CD4-positive, alpha-beta memory T cell (primary cell): ENCODE measurements at regions of chr5 and their contacts with region 1.

Region 1: DNA sequence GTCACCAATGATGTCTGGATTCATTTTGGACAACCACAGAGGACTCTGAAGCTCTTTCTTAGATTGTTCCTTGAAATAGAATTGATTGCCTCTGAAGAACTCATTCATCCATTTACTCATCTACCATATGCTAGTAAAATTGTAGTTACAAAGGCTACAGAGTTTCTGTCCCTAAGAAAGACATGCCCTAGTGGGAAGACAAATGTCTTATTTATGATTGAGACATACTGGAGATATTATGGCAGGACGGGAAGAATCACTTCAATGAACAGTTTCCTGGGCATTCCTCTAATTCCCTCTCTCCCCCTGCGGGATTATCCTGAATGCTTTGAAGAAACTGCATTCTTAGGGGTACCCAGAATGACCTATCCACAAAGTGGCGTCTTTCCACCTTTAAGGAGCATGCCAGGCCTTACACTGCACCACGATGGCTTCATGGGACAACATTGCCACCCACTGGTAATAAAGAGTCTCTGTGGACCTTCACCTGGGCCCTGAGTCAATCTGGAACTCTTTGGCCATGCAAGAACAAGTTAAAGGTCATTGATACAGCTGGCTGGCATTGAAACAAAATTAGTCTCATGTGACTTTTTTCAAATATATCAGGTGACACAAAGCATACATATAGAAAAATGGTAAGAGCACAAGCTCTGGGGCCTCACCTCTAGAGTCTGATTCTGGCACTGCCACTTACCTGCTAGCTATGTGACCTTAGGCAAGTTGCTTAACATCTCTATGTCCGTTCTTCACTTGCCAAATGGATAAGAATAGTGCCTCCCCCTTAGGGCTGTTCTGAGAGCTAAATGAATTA is 32.1 kb downstream of the ANKRD55 start:
- DNase-seq: peak; percentile 59 to 66 (median 63)
- H3K4me3 ChIP-seq: no peak overlapping the region
- H3K4me3 Mint-ChIP-seq: peak overlapping the region in 1 of 8 donors; percentile 24
- H3K27ac ChIP-seq: no peak overlapping the region
- H3K27ac Mint-ChIP-seq: peak overlapping the region in 2 of 7 donors; percentile 2 to 38
- H3K4me1 ChIP-seq: peaks cover 12% of the 10 kb centered on the region
- H3K4me1 Mint-ChIP-seq: peaks cover 17 to 29% (median 24%) of the 10 kb centered on the region in 4 donors
- H3K27me3 ChIP-seq: no peaks in the 10 kb centered on the region
- H3K27me3 Mint-ChIP-seq: no peaks in the 10 kb centered on the region

Region 2: GRCh38 chr5:55344392-55344992 is 856.6 kb before region 1 on chr5:
- CTCF ChIA-PET with region 1: no interaction called
- POLR2A ChIA-PET with region 1: no interaction called
- intact Hi-C with region 1: loop called (anchors 10 kb)
- DNase-seq: peak; percentile 38 to 59 (median 55)
- H3K4me3 ChIP-seq: no peak overlapping the region
- H3K4me3 Mint-ChIP-seq: no peak overlapping the region
- H3K27ac ChIP-seq: no peak overlapping the region
- H3K27ac Mint-ChIP-seq: peak overlapping the region in 4 of 7 donors; percentile 57 to 82 (median 72)
- H3K4me1 ChIP-seq: no peaks in the 10 kb centered on the region
- H3K4me1 Mint-ChIP-seq: peaks cover 0 to 6% (median 3%) of the 10 kb centered on the region in 4 donors
- H3K27me3 ChIP-seq: no peaks in the 10 kb centered on the region
- H3K27me3 Mint-ChIP-seq: no peaks in the 10 kb centered on the region

Region 3: DNA sequence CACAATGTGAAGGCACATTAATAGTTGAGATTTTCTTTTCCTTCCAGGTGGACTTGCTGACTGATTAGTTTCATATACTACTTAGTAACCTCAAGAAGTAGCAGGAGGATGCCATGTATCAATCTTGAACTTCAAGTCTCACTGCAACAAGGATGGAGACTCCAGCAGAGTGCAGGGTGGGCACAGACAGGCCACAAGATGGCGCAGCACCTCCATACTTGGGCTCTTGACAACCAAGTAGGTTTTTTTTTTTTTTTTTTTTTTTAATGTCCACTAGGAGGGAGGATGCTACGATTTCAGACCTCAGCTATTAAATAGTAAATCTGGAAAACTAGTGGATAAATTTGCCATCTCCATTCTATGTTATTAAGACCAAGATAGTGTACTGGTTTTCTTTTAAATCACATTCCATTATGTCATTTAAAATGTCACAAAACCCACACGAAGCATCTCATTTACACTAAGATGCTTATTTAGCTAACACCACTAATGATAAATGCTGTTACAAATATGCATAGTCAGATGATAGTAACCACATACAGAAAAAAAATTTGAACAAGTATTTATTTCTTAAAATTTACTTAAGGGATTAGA is 264.9 kb before region 1 on chr5:
- CTCF ChIA-PET with region 1: interaction called, 146 read pairs
- POLR2A ChIA-PET with region 1: interaction called, 8 read pairs
- intact Hi-C with region 1: loop called (anchors 1 kb)
- DNase-seq: peak; percentile 61 to 76 (median 65)
- H3K4me3 ChIP-seq: no peak overlapping the region
- H3K4me3 Mint-ChIP-seq: no peak overlapping the region
- H3K27ac ChIP-seq: no peak overlapping the region
- H3K27ac Mint-ChIP-seq: peak overlapping the region in 4 of 7 donors; percentile 25 to 73 (median 42)
- H3K4me1 ChIP-seq: peaks cover 5% of the 10 kb centered on the region
- H3K4me1 Mint-ChIP-seq: peaks cover 0 to 8% (median 4%) of the 10 kb centered on the region in 4 donors
- H3K27me3 ChIP-seq: no peaks in the 10 kb centered on the region
- H3K27me3 Mint-ChIP-seq: no peaks in the 10 kb centered on the region

Region 4: DNA sequence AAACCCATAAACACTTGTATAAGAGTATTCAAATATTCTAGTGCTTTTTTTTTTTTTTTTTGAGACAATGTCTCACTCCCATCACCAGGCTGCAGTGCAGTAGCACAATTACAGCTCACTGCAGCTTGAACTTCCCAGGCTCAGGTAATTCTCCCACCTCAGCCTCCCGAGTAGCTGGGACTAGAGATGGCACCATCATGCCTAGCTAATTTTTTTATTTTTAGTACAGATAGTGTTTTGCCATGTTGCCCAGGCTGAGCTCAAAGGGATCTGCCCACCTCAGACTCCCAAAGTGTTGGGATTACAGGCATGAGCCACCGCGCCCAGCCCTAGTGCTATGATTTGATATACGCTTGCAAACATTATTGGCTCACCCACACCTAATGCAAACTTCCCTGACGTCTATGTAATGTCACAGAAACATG is 218.1 kb before region 1 on chr5:
- CTCF ChIA-PET with region 1: interaction called, 194 read pairs
- POLR2A ChIA-PET with region 1: interaction called, 5 read pairs
- intact Hi-C with region 1: loop called (anchors 1 kb)
- DNase-seq: peak in 4 of 5 donors; percentile 22 to 34 (median 28)
- H3K4me3 ChIP-seq: no peak overlapping the region
- H3K4me3 Mint-ChIP-seq: peak overlapping the region; percentile 44 to 81 (median 64)
- H3K27ac ChIP-seq: no peak overlapping the region
- H3K27ac Mint-ChIP-seq: peak overlapping the region in 6 of 7 donors; percentile 19 to 86 (median 74)
- H3K4me1 ChIP-seq: peaks cover 90% of the 10 kb centered on the region
- H3K4me1 Mint-ChIP-seq: peaks cover 53 to 86% (median 69%) of the 10 kb centered on the region in 4 donors
- H3K27me3 ChIP-seq: no peaks in the 10 kb centered on the region
- H3K27me3 Mint-ChIP-seq: no peaks in the 10 kb centered on the region

Region 5: GRCh38 chr5:56095579-56096102 is 105.4 kb before region 1 on chr5:
- CTCF ChIA-PET with region 1: interaction called, 12 read pairs
- POLR2A ChIA-PET with region 1: no interaction called
- intact Hi-C with region 1: no loop called
- DNase-seq: no peak
- H3K4me3 ChIP-seq: no peak overlapping the region
- H3K4me3 Mint-ChIP-seq: peak overlapping the region in 6 of 8 donors; percentile 1 to 84 (median 12)
- H3K27ac ChIP-seq: no peak overlapping the region
- H3K27ac Mint-ChIP-seq: peak overlapping the region; percentile 23 to 91 (median 73)
- H3K4me1 ChIP-seq: peaks cover 87% of the 10 kb centered on the region
- H3K4me1 Mint-ChIP-seq: peaks cover 55 to 80% (median 66%) of the 10 kb centered on the region in 4 donors
- H3K27me3 ChIP-seq: no peaks in the 10 kb centered on the region
- H3K27me3 Mint-ChIP-seq: no peaks in the 10 kb centered on the region

Region 6: DNA sequence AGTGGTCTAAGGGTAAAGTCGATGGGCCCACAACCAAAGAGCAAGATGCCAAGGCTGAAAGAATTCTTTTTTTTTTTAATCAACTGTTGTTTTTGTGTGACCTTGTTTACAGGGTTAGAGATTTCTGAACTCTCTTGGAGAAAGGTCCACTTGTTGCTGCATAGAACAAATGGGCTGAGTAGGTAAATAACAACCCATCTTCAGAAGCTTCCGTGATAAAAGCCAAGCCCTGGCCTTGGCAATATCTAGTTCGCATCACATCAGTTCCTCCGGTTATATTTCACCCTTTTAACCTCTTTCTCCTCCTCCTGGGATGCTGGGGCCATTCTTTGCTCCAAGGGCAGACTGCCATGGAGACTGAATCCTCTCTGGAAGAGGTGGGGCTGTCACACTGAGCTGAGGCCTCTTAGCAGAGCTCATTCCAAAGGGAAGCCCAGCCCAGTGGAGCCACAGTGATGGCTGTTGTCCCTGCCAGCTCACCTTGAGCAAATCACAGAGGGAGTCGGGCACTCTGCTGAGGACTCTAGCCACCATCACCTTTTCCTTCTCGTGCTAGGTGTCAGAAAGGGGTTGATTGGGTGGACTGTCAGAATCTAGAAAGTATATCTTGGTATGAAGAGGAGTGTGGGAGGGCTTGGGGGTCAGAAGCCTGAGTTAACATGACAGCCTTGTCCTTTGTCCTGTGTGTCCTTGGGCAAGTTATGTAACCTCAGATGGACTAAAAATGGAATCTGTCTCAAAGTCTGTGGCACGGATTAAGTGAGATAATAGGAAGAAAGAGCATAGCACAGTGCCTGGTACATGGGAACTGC is 14.2 kb after region 1 on chr5:
- CTCF ChIA-PET with region 1: interaction called, 16 read pairs
- POLR2A ChIA-PET with region 1: no interaction called
- intact Hi-C with region 1: no loop called
- DNase-seq: no peak
- H3K4me3 ChIP-seq: no peak overlapping the region
- H3K4me3 Mint-ChIP-seq: peak overlapping the region in 1 of 8 donors; percentile 41
- H3K27ac ChIP-seq: no peak overlapping the region
- H3K27ac Mint-ChIP-seq: peak overlapping the region in 1 of 7 donors; percentile 57
- H3K4me1 ChIP-seq: no peaks in the 10 kb centered on the region
- H3K4me1 Mint-ChIP-seq: peaks cover 3 to 8% (median 6%) of the 10 kb centered on the region in 4 donors
- H3K27me3 ChIP-seq: no peaks in the 10 kb centered on the region
- H3K27me3 Mint-ChIP-seq: peaks cover 0 to 1% of the 10 kb centered on the region in 2 donors